Endothelial cell of umbilical vein (primary cell): ENCODE measurements at regions of chr1 and their contacts with region 1.

Region 1: GRCh38 chr1:110605901-110606656 is at the start of gene KCNA2:
- DNase-seq: peak; percentile 10
- H3K4me3 ChIP-seq: no peak within 1 kb of the TSS
- H3K27ac ChIP-seq: no peak within 1 kb of the TSS
- H3K4me1 ChIP-seq: no peaks in the 10 kb centered on the region
- H3K27me3 ChIP-seq: peaks cover 50 to 56% of the 10 kb centered on the region in 2 experiments
- CTCF ChIP-seq: peak in 1 of 2 donors; percentile 4
- POLR2A ChIP-seq: no peak
- total RNA-seq, gene KCNA2: not detected in 2 replicates

Region 2: GRCh38 chr1:110561596-110561995 is 44.5 kb before region 1 on chr1:
- CTCF ChIA-PET with region 1: interaction called, 3 read pairs
- POLR2A ChIA-PET with region 1: no interaction called
- dilution Hi-C with region 1: no loop called
- intact Hi-C with region 1: loop called (anchors 5 kb)
- DNase-seq: no peak
- H3K4me3 ChIP-seq: no peak overlapping the region
- H3K27ac ChIP-seq: no peak overlapping the region
- H3K4me1 ChIP-seq: no peaks in the 10 kb centered on the region
- H3K27me3 ChIP-seq: peaks cover 0 to 4% of the 10 kb centered on the region in 2 experiments
- CTCF ChIP-seq: no peak
- POLR2A ChIP-seq: no peak

Region 3: DNA sequence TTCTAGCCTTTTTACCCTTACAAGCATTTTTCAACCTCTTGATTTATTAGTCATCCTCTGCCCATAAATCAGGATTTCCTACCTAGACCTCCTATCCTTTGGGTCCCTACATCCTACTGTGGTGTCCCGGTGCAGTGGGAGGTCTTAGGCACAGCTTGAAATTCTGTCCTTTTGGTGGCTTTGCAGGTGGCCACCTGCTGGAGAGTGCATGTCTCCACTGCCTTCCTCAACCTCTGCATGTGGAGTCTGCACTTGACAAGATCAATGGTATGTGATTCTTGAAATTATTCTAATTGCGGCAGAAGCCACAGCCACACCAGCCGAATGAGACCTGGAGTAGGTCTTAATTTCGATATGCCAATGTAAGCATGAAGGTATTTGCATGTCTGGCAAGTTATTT is 80.1 kb after region 1 on chr1:
- CTCF ChIA-PET with region 1: no interaction called
- POLR2A ChIA-PET with region 1: no interaction called
- dilution Hi-C with region 1: no loop called
- intact Hi-C with region 1: no loop called
- DNase-seq: no peak
- H3K4me3 ChIP-seq: no peak overlapping the region
- H3K27ac ChIP-seq: no peak overlapping the region
- H3K4me1 ChIP-seq: no peaks in the 10 kb centered on the region
- H3K27me3 ChIP-seq: no peaks in the 10 kb centered on the region
- CTCF ChIP-seq: no peak
- POLR2A ChIP-seq: no peak

Region 4: DNA sequence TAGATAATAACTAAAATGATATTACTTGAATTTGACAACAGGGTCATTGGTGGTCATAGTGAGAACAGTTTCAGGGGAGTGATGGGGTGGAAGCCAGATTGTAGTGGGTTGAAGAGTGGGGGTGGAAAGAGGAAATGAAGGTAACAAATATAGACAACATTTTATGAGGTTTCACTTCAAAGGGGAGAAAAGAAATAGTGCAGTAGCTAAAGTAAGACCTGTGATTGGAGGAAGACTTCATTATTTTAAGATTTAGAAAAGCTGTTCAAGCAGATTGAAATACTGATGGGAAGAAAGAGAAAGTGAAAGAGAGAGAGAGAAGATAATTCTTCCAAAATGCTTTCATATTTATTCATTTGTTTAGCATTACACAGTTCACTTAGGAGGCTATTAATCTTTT is 120.7 kb after region 1 on chr1:
- CTCF ChIA-PET with region 1: no interaction called
- POLR2A ChIA-PET with region 1: no interaction called
- dilution Hi-C with region 1: no loop called
- intact Hi-C with region 1: no loop called
- DNase-seq: no peak
- H3K4me3 ChIP-seq: no peak overlapping the region
- H3K27ac ChIP-seq: no peak overlapping the region
- H3K4me1 ChIP-seq: no peaks in the 10 kb centered on the region
- H3K27me3 ChIP-seq: no peaks in the 10 kb centered on the region
- CTCF ChIP-seq: no peak
- POLR2A ChIP-seq: no peak

Region 5: GRCh38 chr1:111778541-111779051 is 1172.5 kb after region 1 on chr1:
- CTCF ChIA-PET with region 1: no interaction called
- POLR2A ChIA-PET with region 1: no interaction called
- dilution Hi-C with region 1: no loop called
- intact Hi-C with region 1: no loop called
- DNase-seq: no peak
- H3K4me3 ChIP-seq: no peak overlapping the region
- H3K27ac ChIP-seq: no peak overlapping the region
- H3K4me1 ChIP-seq: no peaks in the 10 kb centered on the region
- H3K27me3 ChIP-seq: no peaks in the 10 kb centered on the region
- CTCF ChIP-seq: no peak
- POLR2A ChIP-seq: no peak